ENCODE measurements at regions of chr10 and their contacts with region 1.

Region 1: DNA sequence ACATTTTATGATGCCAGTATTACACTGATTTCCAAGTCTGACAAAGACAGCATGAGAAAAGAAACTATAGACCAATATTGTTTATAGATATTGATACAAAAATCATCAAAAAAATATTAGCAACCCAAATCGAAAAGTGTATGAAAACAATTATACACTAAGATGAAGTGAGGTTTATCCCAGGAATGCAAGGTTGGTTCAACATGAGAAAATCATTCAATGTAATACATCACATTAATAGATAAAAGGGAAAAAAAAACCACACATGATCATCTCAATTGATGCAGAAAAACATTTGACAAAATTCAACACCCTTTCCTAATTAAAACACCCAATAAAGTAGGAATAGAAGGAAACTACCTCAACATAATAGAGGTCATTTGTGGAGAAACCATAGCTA is 153.9 kb downstream of the DNAJC1 start:
- DNase-seq: no peak
- ATAC-seq: no peak

Region 2: DNA sequence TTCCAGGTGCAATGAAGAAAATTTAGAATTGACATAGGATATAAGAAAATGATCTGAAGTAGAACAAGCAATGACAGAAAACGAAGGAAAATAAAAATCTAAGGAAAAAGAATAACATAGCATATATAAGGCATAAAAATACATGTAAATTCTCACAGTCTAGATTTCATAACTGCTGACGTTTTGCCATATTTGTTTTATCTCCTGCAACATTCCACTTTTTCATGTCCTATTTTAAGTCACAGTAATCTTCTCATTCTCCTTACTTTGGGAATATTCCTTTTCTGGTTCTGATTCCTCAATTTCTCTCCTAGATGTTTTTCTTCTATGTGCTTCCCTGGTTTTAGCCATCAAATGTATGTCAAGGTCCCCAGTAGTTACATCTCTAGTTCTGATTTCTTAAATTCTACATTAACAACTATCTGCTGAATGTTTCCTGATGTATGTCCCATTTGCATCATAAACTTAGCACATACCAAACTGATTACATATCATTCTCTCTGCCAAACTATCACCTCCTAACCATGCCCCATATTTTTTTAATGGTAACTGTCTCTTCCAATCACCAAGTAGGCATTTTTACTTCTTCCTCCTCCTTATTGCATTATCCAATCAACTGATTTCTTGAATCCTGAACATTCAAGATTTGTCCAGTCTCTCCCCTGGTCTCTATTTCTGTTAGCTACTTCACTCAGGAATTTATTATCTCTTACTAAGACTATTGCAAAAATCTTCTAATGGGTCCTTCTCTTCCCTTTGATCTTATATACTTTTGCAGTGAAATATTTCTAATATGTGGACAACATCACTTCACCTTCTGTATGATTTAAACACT is 17.4 kb before region 1 on chr10:
- intact Hi-C with region 1: loop called (anchors 2 kb)
- DNase-seq: no peak
- ATAC-seq: no peak

Region 3: GRCh38 chr10:21899736-21900135 is 50.1 kb after region 1 on chr10:
- intact Hi-C with region 1: no loop called
- DNase-seq: no peak
- ATAC-seq: no peak

Region 4: GRCh38 chr10:22174442-22174841 is 324.8 kb after region 1 on chr10:
- intact Hi-C with region 1: no loop called
- DNase-seq: no peak
- ATAC-seq: no peak

Measured in sciatic nerve (tissue), 2 donors.